ENCODE measurements at regions of chr12 and their contacts with region 1.

Region 1: DNA sequence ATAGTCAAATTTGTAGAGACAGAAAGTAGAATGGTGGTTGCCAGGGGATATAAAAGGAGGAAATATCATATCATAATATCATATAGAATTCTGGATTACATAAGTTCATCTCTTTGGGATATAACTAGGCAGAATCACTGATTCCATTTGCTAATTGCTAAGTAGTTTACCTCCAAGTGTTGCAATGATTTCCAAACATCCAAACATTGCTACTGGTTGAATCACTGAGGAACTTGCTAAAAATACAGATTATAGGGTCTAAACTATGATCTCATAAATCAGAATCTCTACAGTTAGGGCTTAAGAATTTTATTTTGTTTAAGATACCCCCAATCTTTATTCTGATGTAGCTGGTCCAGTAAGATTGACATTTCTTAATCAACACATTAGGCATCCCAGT is 16.1 kb upstream of the TAS2R42 start:
- DNase-seq: no peak
- ATAC-seq: no peak

Region 2: GRCh38 chr12:10771132-10771733 is 431.6 kb before region 1 on chr12:
- intact Hi-C with region 1: loop called (anchors 1 kb)
- DNase-seq: no peak
- ATAC-seq: no peak

Region 3: DNA sequence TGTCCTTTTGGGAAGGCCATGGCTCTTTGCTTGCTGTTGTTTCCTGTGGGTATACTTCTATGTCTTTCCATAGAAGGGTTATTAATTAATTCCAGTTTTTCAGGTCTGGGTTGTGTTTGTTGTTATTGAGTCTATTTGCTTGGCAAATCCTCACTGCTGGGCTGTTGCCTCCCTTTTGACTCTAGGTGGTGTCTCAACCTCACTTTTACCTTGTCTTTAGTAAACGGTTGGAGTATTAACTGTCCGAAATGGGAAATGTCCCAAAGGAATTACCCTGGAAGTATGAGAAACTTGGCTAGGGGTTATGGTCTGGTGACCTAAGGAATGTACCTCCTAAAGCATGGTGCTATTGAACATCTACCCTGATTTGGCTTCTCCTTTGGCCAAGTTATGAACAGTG is 335.4 kb before region 1 on chr12:
- intact Hi-C with region 1: loop called (anchors 10 kb)
- DNase-seq: no peak
- ATAC-seq: no peak

Region 4: DNA sequence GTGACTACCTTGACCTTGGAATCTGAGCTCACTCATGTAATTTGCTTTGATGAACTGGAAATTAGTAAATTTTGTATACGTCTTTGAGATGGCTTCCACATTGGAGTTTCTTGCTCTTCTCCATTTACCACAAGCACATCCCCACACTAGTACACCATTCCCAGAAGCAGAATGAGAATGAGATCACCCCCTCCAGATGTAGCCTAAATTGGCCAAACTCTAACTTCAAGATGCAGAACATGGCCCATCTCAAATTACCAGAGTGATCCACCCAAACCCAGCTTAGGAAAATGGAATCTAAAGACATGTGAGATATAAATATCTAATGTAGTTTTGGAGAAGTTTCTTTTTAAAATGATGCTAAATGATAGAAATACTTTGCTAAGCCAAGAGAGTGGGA is 195.2 kb before region 1 on chr12:
- intact Hi-C with region 1: no loop called
- DNase-seq: no peak
- ATAC-seq: no peak

Region 5: GRCh38 chr12:11486623-11487444 is 284.0 kb after region 1 on chr12:
- intact Hi-C with region 1: loop called (anchors 10 kb)
- DNase-seq: peak; percentile 78
- ATAC-seq: peak; percentile 59

Region 6: GRCh38 chr12:11615481-11615880 is 412.7 kb after region 1 on chr12:
- intact Hi-C with region 1: no loop called
- DNase-seq: no peak
- ATAC-seq: no peak

Measured in Right ventricle myocardium inferior (tissue), 1 donor.